ENCODE measurements at regions of chr3 and their contacts with region 1.

Region 1: GRCh38 chr3:88678747-88679146 is 428.7 kb upstream of the EPHA3 start:
- DNase-seq: no peak
- ATAC-seq: no peak
- H3K4me3 ChIP-seq: no peak overlapping the region
- H3K27ac ChIP-seq: no peak overlapping the region
- H3K4me1 ChIP-seq: no peaks in the 10 kb centered on the region
- H3K27me3 ChIP-seq: no peaks in the 10 kb centered on the region
- CTCF ChIP-seq: no peak
- POLR2A ChIP-seq: no peak
- RAD21 ChIP-seq: no peak

Region 2: GRCh38 chr3:88912294-88912877 is 233.6 kb after region 1 on chr3:
- CTCF ChIA-PET with region 1: no interaction called
- POLR2A ChIA-PET with region 1: no interaction called
- dilution Hi-C with region 1: no loop called
- in situ Hi-C with region 1: no loop called
- intact Hi-C with region 1: loop called (anchors 5 kb)
- DNase-seq: no peak
- ATAC-seq: no peak
- H3K4me3 ChIP-seq: no peak overlapping the region
- H3K27ac ChIP-seq: no peak overlapping the region
- H3K4me1 ChIP-seq: no peaks in the 10 kb centered on the region
- H3K27me3 ChIP-seq: no peaks in the 10 kb centered on the region
- CTCF ChIP-seq: no peak
- POLR2A ChIP-seq: no peak
- RAD21 ChIP-seq: no peak